ENCODE measurements at regions of chr1 and their contacts with region 1.

Region 1: GRCh38 chr1:35577071-35577998 is 4.2 kb downstream of the TFAP2E start:
- DNase-seq: no peak
- H3K4me3 ChIP-seq: peak overlapping the region; percentile 33 to 69 (median 47)
- H3K27ac ChIP-seq: no peak overlapping the region
- H3K4me1 ChIP-seq: peaks cover 16 to 62% (median 19%) of the 10 kb centered on the region in 3 donors
- H3K27me3 ChIP-seq: peaks cover 0 to 62% (median 0%) of the 10 kb centered on the region in 4 donors
- CTCF ChIP-seq: no peak
- POLR2A ChIP-seq: no peak

Region 2: DNA sequence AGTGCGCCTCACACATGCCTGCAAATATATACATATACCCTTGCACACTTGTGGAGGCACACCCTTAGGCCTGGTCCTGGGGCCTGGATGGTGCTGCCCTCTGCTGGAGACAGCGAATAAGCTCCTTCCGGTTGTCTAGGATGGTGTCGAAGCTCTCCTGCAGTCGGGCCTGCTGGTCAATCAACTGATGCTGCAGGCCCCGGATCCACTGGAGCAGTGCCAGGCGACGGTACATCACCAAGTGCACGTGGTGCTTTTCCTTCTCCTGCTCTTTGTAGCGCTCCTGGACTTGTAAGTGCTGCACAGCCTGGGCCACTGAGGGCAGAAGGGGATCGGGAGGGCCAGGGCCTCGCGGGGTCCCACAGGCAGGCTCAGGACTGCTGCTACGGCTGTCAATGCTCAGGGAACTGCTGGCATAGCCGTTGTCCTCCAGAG is 138.2 kb after region 1 on chr1:
- intact Hi-C with region 1: loop called (anchors 5 kb)
- DNase-seq: no peak
- H3K4me3 ChIP-seq: no peak overlapping the region
- H3K27ac ChIP-seq: no peak overlapping the region
- H3K4me1 ChIP-seq: peaks cover 4 to 50% (median 13%) of the 10 kb centered on the region in 3 donors
- H3K27me3 ChIP-seq: peaks cover 0 to 64% (median 0%) of the 10 kb centered on the region in 4 donors
- CTCF ChIP-seq: peak; percentile 48 to 80 (median 70)
- POLR2A ChIP-seq: no peak

Measured in esophagus squamous epithelium (tissue), 5 donors.